Activated CD4-positive, alpha-beta memory T cell treated with anti-CD3 and anti-CD28 coated beads, Interleukin-2, amount 10 ng/mL, durations not matched to agents 7 days and 5 days (primary cell): ENCODE measurements at regions of chr12 and their contacts with region 1.

Region 1: GRCh38 chr12:89524541-89525285 is at the start of gene GALNT4:
- DNase-seq: peak; percentile 84
- H3K4me3 Mint-ChIP-seq: peak within 1 kb of the TSS; percentile 90
- H3K27ac Mint-ChIP-seq: peak within 1 kb of the TSS; percentile 94
- H3K4me1 Mint-ChIP-seq: peaks cover 69% of the 10 kb centered on the region
- H3K27me3 Mint-ChIP-seq: no peaks in the 10 kb centered on the region
- total RNA-seq, gene GALNT4: 21.5 to 23.3 TPM

Region 2: GRCh38 chr12:89040146-89040964 is 484.4 kb before region 1 on chr12:
- CTCF ChIA-PET with region 1: interaction called, 8 read pairs
- POLR2A ChIA-PET with region 1: interaction called, 14 read pairs
- DNase-seq: peak; percentile 90
- H3K4me3 Mint-ChIP-seq: peak overlapping the region; percentile 35
- H3K27ac Mint-ChIP-seq: peak overlapping the region; percentile 96
- H3K4me1 Mint-ChIP-seq: peaks cover 58% of the 10 kb centered on the region
- H3K27me3 Mint-ChIP-seq: no peaks in the 10 kb centered on the region

Region 3: DNA sequence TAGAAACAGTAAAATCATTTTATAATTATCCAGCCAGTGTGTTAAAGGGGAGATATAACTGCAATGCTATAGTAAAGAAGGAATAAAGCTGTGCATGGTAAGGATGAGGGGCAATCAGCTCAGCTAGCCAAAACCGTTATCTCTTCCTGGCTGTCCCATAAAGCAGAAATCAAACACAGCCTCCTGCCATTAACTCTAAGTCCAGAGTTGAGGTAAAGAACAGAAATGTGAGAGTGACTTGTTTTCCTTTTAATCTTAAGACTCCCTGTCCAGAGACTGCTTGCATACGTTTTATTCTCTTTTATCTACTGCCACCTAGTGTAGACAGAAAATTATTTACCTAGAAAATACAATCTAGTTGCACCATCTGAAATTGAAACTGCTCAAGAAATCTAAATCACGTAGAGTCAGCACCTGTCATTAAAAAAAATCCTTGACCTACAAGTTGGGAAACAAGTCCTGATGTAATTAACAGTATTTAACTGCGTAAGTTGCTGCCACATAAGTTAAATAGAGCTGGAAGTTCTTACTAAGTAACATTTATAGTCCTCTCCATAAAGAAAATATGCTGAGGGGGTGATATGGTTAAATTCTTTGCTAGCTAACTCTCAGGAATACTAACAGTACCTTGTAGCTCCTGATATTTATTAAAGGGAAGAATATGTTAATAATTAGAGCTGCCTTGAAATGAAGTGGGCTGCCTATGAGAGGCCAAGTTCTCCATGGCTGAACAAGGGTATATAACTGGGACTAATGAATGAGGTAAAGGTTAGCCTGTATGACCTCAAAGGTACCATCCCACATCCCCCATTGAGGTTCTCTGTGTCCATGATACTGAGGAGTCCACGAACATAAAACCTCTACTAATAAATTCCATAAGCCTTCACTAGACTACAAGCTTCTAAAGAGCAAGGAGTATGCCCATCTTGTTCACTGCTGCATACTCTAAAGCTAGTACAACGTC is 62.8 kb before region 1 on chr12:
- CTCF ChIA-PET with region 1: interaction called, 209 read pairs
- POLR2A ChIA-PET with region 1: interaction called, 111 read pairs
- DNase-seq: no peak
- H3K4me3 Mint-ChIP-seq: peak overlapping the region; percentile 65
- H3K27ac Mint-ChIP-seq: peak overlapping the region; percentile 59
- H3K4me1 Mint-ChIP-seq: peaks cover 62% of the 10 kb centered on the region
- H3K27me3 Mint-ChIP-seq: no peaks in the 10 kb centered on the region

Region 4: GRCh38 chr12:89494411-89495231 is 30.1 kb before region 1 on chr12:
- CTCF ChIA-PET with region 1: interaction called, 5 read pairs
- POLR2A ChIA-PET with region 1: interaction called, 18 read pairs
- DNase-seq: peak; percentile 45
- H3K4me3 Mint-ChIP-seq: peak overlapping the region; percentile 8
- H3K27ac Mint-ChIP-seq: peak overlapping the region; percentile 92
- H3K4me1 Mint-ChIP-seq: peaks cover 30% of the 10 kb centered on the region
- H3K27me3 Mint-ChIP-seq: no peaks in the 10 kb centered on the region